ENCODE measurements at regions of chr7 and their contacts with region 1.

Region 1: DNA sequence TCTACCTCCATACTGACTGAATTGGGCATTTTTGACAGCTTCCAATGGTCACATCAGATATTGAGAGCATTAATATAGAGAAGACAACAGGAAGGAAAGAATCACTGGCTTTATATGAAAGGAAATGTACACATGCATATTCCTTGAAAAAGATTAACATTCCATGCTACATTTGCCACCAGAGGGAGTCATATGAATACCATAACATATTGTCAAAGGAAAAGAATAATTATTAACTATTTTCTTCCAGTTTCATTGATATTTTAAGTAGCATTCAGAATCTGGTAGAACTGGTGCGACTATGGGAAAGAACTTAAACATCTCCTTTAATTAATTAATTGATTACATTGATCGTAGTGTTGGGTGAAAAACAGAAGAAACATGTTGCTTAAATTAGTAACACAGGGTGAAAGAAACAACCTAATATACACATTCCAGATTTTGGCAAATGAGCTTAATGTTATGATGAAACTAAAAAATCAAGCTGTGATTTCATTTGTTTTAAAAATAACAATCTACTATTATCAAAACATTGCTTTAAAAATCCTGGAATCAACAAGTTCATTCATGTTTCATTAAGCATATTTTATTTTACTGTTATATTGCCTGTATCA is 71.5 kb downstream of the GPR85 start:
- DNase-seq: no peak
- ATAC-seq: no peak
- H3K4me3 Mint-ChIP-seq: no peak overlapping the region
- H3K27ac Mint-ChIP-seq: no peak overlapping the region
- H3K4me1 Mint-ChIP-seq: no peaks in the 10 kb centered on the region
- H3K27me3 Mint-ChIP-seq: no peaks in the 10 kb centered on the region

Region 2: GRCh38 chr7:112622159-112622715 is 392.9 kb before region 1 on chr7:
- CTCF ChIA-PET with region 1: no interaction called
- POLR2A ChIA-PET with region 1: no interaction called
- intact Hi-C with region 1: no loop called
- DNase-seq: no peak
- ATAC-seq: no peak
- H3K4me3 Mint-ChIP-seq: no peak overlapping the region
- H3K27ac Mint-ChIP-seq: no peak overlapping the region
- H3K4me1 Mint-ChIP-seq: no peaks in the 10 kb centered on the region
- H3K27me3 Mint-ChIP-seq: peaks cover 9% of the 10 kb centered on the region

Region 3: DNA sequence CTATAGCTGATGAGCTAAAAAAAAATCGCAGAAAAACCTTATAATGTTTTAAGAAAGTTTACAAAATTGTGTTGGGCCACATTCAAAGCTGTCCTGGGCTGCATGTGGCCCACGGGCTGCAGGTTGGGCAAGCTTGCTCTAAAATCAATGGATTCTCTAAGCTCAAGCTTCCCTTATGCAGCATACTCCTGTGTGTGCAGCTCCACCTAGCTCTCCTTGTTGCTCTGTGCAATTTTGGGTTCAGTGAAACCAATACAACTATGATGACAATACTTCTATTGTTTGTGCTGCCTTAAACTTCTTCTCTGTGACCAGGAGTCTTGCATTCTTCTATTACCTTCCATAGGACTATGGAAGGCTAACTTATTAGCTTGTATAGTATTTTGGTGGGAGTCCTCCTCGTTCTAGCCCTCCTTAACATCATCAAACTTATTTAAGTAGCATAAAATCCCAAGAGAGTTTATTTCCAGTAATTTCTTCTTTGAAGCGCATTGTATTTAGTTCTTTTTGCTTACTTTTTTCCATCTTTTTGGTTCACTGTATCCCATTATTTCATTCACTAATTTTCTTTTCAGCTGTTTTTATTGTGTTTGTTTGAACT is 274.1 kb after region 1 on chr7:
- CTCF ChIA-PET with region 1: no interaction called
- POLR2A ChIA-PET with region 1: no interaction called
- intact Hi-C with region 1: loop called in 1 of 2 experiments (anchors 5 kb)
- DNase-seq: peak; percentile 16
- ATAC-seq: no peak
- H3K4me3 Mint-ChIP-seq: no peak overlapping the region
- H3K27ac Mint-ChIP-seq: no peak overlapping the region
- H3K4me1 Mint-ChIP-seq: no peaks in the 10 kb centered on the region
- H3K27me3 Mint-ChIP-seq: peaks cover 4% of the 10 kb centered on the region